Head of caudate nucleus (tissue), 42 donors: ENCODE measurements at regions of chr17 and their contacts with region 1.

Region 1: DNA sequence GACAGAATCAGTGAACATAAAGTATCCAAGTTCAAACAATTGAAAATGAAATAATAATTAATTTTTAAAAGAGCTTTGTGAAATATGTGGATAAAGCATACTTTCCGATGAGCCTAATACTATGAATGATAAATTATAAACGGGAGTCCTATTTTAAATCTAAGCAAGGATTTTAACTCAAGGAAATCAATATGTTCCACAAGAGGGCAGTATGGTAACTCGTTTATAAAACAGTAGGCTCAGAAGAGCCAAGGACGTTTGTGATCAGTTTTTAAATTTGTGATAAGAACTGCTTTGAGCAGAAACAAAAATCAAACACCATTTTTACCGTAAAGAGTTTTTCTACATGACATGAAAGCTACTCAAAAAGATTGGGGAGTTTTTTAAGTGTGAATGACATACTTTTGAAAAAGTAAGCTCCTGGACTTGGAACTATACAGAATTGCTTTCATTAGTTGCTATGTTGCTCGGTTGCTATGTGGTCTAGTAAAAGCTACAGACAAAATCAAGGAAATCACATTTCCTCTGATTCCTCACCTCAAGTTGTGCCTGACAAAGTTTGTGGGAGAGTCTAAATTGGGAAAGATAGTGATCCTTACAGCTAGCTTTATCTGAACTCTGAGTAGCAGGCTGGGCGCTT is 11.8 kb upstream of the TEKT1 start:
- DNase-seq: no peak

Region 2: GRCh38 chr17:7004398-7005253 is 161.3 kb after region 1 on chr17:
- intact Hi-C with region 1: loop called (anchors 10 kb)
- DNase-seq: peak in 7 of 42 donors; percentile 36 to 74 (median 53)